SK-N-SH (cell line): ENCODE measurements at regions of chr9 and their contacts with region 1.

Region 1: GRCh38 chr9:87099407-87099806 is 152.1 kb upstream of the GAS1 start:
- DNase-seq: no peak
- H3K4me3 ChIP-seq: no peak overlapping the region
- H3K27ac ChIP-seq: no peak overlapping the region
- H3K4me1 ChIP-seq: no peaks in the 10 kb centered on the region; a peak in 2 of 4 replicates
- H3K27me3 ChIP-seq: no peaks in the 10 kb centered on the region
- CTCF ChIP-seq: no peak
- EP300 ChIP-seq: no peak
- RAD21 ChIP-seq: no peak

Region 2: DNA sequence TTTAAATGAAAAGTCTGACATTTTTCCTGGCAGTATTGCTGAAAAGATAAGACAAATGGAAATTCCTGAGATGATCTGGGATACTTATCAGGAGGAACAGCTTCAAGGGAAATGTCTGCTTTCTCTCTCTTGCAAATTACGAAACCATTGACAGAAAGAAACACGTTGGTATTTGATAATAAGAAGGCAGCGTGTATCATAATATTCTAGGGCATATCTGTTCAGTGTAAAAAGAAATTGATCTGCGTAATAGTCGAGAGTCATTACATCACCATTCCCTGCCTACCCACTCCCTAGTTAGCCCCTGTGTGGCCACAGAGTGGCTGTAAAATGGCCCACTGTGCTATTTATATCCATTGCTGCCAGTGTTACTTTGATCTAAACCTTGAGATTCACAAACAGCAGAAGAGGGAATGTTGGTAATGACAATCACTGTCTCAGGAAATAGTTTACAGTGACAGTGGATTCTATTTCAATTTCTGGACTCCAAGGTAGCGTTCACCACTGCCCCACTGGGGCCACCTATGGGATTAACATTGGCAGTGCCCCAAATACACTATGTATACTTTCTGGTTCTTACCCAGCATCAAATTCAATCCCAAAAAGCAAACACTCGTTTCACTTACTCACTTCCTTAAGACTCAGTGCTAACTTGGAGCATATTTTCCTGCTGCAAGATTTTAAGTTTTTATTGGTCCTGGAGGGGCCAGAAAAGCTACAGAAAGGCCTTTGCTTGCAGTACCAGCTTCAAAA is 18.7 kb before region 1 on chr9:
- CTCF ChIA-PET with region 1: interaction called, 13 read pairs
- POLR2A ChIA-PET with region 1: no interaction called
- DNase-seq: peak; percentile 67
- H3K4me3 ChIP-seq: no peak overlapping the region
- H3K27ac ChIP-seq: peak overlapping the region; percentile 31 to 89; a peak in 3 of 4 replicates
- H3K4me1 ChIP-seq: peaks cover 6 to 7% of the 10 kb centered on the region in 2 experiments; a peak in 3 of 4 replicates
- H3K27me3 ChIP-seq: no peaks in the 10 kb centered on the region
- CTCF ChIP-seq: peak; percentile 50
- EP300 ChIP-seq: peak; percentile 93 to 95
- RAD21 ChIP-seq: peak; percentile 76